CD8-positive, alpha-beta T cell (primary cell): ENCODE measurements at regions of chr11 and their contacts with region 1.

Region 1: DNA sequence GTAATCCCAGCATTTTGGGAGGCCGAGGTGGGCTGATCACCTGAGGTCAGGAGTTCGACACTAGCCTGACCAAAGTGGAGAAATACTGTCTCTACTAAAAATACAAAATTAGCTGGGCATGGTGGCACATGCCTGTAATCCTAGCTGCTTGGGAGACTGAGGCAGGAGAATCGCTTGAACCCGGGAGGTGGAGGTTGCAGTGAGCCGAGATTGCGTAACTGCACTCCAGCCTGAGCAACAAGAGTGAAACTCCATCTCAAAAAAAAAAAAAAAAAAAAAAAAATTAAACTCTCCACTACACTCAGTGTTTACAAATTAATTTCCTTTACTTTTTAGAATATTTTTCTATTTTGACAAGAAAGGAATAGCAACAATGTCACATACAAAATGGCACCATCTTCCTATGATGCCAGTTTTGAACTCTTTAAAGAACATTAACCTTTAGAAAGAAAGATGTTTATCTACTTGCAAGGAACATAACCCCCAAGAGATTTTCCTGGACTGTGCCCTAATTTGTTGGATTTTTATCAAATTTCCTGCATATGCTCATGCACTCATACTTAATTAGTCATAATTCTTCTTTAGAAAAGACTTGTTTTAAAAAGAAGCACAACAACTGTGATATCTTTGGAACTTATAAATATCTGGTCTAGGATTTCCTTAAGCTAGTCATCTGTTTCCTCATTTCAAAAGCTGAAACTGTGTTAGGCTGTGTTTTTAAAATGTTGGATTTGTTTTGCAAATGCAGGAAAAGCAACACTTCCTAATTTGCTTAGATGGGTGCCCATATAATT is 22.6 kb upstream of the HIPK3 start:
- DNase-seq: no peak
- ATAC-seq: no peak
- H3K4me3 ChIP-seq: no peak overlapping the region
- H3K4me3 Mint-ChIP-seq: no peak overlapping the region
- H3K27ac ChIP-seq: no peak overlapping the region
- H3K27ac Mint-ChIP-seq: no peak overlapping the region
- H3K4me1 ChIP-seq: no peaks in the 10 kb centered on the region
- H3K4me1 Mint-ChIP-seq: no peaks in the 10 kb centered on the region
- H3K27me3 ChIP-seq: no peaks in the 10 kb centered on the region
- H3K27me3 Mint-ChIP-seq: no peaks in the 10 kb centered on the region
- CTCF ChIP-seq: no peak

Region 2: GRCh38 chr11:33182246-33182878 is 52.2 kb before region 1 on chr11:
- CTCF ChIA-PET with region 1: no interaction called
- POLR2A ChIA-PET with region 1: no interaction called
- intact Hi-C with region 1: loop called in 1 of 2 experiments (anchors 5 kb)
- DNase-seq: no peak
- ATAC-seq: no peak
- H3K4me3 ChIP-seq: no peak overlapping the region
- H3K4me3 Mint-ChIP-seq: no peak overlapping the region
- H3K27ac ChIP-seq: no peak overlapping the region
- H3K27ac Mint-ChIP-seq: no peak overlapping the region
- H3K4me1 ChIP-seq: no peaks in the 10 kb centered on the region
- H3K4me1 Mint-ChIP-seq: peaks cover 10% of the 10 kb centered on the region
- H3K27me3 ChIP-seq: no peaks in the 10 kb centered on the region
- H3K27me3 Mint-ChIP-seq: no peaks in the 10 kb centered on the region
- CTCF ChIP-seq: no peak